ENCODE measurements at regions of chr9 and their contacts with region 1.

Region 1: GRCh38 chr9:137188490-137189296 is at the starts of genes ANAPC2 and SSNA1:
- DNase-seq: peak; percentile 86 to 98
- H3K4me3 ChIP-seq: peak within 1 kb of the TSS; percentile 71
- CTCF ChIP-seq: no peak
- POLR2A ChIP-seq: peak in 1 of 2 donors; percentile 37
- total RNA-seq, gene ANAPC2: 26.2 to 69.3 (median 30.5) TPM
- total RNA-seq, gene SSNA1: 79.2 to 112 (median 93.1) TPM

Region 2: DNA sequence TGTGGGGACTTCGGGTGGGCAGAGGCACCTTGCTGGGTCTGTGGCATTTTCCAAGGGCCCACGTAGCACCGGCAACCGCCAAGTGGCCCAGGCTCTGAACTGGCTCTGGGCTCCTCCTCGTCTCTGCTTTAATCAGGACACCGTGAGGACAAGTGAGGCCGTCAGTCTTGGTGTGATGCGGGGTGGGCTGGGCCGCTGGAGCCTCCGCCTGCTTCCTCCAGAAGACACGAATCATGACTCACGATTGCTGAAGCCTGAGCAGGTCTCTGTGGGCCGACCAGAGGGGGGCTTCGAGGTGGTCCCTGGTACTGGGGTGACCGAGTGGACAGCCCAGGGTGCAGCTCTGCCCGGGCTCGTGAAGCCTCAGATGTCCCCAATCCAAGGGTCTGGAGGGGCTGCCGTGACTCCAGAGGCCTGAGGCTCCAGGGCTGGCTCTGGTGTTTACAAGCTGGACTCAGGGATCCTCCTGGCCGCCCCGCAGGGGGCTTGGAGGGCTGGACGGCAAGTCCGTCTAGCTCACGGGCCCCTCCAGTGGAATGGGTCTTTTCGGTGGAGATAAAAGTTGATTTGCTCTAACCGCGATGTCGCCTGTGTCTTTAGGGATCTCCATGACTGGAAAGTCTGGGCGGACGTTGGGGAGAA is 80.0 kb before region 1 on chr9:
- intact Hi-C with region 1: loop called (anchors 5 kb)
- DNase-seq: no peak
- H3K4me3 ChIP-seq: no peak overlapping the region
- CTCF ChIP-seq: no peak
- POLR2A ChIP-seq: no peak

Measured in lower leg skin (tissue), 4 donors.